T-cell (primary cell): ENCODE measurements at regions of chr11 and their contacts with region 1.

Region 1: DNA sequence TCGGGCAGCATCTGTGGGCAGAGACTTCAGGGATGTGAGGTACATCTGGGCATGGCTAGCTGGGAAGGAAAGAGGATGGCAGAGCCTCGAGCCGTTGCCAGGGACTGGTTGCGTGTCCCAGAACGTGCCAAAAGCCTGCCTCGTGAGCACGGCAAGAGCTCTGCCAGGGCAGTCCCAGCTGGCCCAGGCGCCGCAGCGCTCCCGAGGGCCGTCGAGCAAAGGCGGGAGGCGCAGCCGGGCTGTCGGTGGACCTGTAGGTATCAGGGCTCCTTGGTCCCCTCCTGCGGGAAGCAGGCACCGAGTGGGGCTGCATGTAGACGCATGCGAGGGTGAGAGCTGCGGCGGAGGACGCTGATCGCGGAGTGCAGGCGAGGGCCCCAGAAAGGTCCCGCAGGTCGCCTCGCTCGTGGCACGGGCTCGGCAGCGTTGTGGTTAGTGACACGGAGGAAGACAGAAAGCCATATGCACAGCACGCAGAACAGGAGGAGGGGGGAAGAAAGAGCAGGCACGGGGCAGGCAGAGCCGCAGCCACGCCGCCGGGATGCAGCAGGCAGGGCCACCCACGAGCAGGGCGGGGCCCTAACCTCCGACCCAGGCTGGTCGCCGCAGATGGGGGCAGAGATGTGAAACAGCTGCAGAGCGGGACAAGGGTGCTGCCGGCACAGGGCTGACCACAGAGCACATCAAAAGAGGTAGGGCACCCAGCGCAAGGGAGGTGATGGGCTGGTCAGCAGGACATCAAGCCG is 18.0 kb downstream of the LSP1 start:
- DNase-seq: peak in 30 of 35 experiments; percentile 28 to 77 (median 48)
- ATAC-seq: peak; percentile 76 to 87 (median 84)
- H3K4me3 ChIP-seq: peak overlapping the region; percentile 20 to 52
- H3K4me3 Mint-ChIP-seq: peak overlapping the region; percentile 75 to 79 (median 75)
- H3K27ac ChIP-seq: peak overlapping the region; percentile 53
- H3K27ac Mint-ChIP-seq: peak overlapping the region; percentile 93 to 94
- H3K4me1 ChIP-seq: peaks cover 29 to 95% of the 10 kb centered on the region in 2 experiments
- H3K4me1 Mint-ChIP-seq: peaks cover 43 to 67% (median 66%) of the 10 kb centered on the region in 3 donors
- H3K27me3 ChIP-seq: no peaks in the 10 kb centered on the region
- H3K27me3 Mint-ChIP-seq: no peaks in the 10 kb centered on the region

Region 2: GRCh38 chr11:1882519-1883238 is 11.8 kb after region 1 on chr11:
- CTCF ChIA-PET with region 1: no interaction called
- POLR2A ChIA-PET with region 1: interaction called in 1 of 2 experiments, 10 read pairs
- DNase-seq: peak; percentile 51 to 90 (median 74)
- ATAC-seq: peak; percentile 84 to 91 (median 86)
- H3K4me3 ChIP-seq: no peak overlapping the region
- H3K4me3 Mint-ChIP-seq: no peak overlapping the region
- H3K27ac ChIP-seq: no peak overlapping the region
- H3K27ac Mint-ChIP-seq: peak overlapping the region; percentile 21 to 22
- H3K4me1 ChIP-seq: peaks cover 9 to 59% of the 10 kb centered on the region in 2 experiments
- H3K4me1 Mint-ChIP-seq: peaks cover 12 to 28% (median 17%) of the 10 kb centered on the region in 3 donors
- H3K27me3 ChIP-seq: no peaks in the 10 kb centered on the region
- H3K27me3 Mint-ChIP-seq: no peaks in the 10 kb centered on the region